Heart right ventricle (tissue), 16 donors: ENCODE measurements at regions of chr12 and their contacts with region 1.

Region 1: GRCh38 chr12:118436002-118436730 is 59.8 kb downstream of the SUDS3 start:
- DNase-seq: peak in 1 of 2 donors; percentile 10
- ATAC-seq: peak in 5 of 8 donors; percentile 59 to 75 (median 64)
- H3K4me3 ChIP-seq: no peak overlapping the region
- H3K27ac ChIP-seq: no peak overlapping the region
- H3K4me1 ChIP-seq: peaks cover 0 to 6% (median 0%) of the 10 kb centered on the region in 9 donors
- H3K27me3 ChIP-seq: peaks cover 0 to 6% (median 0%) of the 10 kb centered on the region in 7 donors
- CTCF ChIP-seq: peak in 8 of 9 donors; percentile 22 to 54 (median 38)

Region 2: DNA sequence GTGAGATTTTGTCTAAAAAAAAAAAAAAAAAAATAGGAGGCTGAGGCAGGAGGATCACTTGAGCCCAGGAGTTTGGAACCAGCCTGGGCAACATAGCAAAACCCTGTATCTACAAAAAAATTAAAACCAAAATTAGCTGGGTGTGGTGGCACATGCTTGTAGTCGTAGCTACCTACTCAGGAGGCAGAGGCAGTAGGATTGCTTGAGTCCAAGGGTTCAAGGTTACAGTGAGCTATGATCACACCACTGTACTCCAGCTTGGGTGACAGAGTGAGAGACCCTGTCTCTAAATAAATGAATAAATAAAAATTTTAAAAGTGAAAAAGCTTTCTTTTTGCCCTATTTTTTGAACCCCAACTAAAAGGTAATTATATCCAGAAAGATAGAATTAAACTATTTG is 186.6 kb before region 1 on chr12:
- intact Hi-C with region 1: no loop called
- DNase-seq: no peak
- ATAC-seq: no peak
- H3K4me3 ChIP-seq: no peak overlapping the region
- H3K27ac ChIP-seq: no peak overlapping the region
- H3K4me1 ChIP-seq: no peaks in the 10 kb centered on the region
- H3K27me3 ChIP-seq: no peaks in the 10 kb centered on the region
- CTCF ChIP-seq: no peak

Region 3: DNA sequence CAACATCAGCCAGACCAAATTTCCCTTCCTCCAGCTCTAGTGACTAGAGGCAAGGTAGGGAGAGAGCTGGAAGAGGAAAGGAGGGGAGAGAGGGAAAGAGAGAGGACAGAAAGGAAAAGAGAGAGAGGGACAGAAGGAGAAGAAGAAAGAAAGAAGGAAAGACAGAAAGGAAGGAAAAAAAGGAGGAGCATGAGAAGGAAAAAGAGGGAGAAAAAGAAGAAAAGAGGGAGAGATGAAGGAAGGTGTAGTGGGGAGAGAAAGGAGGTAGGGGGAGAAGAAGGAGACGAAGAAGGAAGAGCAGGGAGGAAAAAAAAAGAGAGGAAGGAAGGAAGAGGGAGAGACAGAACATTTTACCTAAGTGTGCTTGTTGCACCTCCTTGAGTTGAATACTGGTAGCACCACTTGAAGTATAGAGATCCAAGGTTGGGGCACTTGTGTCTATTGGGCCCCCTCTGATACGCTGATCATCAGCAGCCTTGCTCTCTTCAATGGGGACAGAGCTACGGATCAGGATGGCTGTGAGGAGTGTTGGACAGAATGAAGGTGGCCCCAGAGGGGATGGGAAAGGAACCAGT is 172.7 kb after region 1 on chr12:
- intact Hi-C with region 1: loop called in 2 of 10 experiments (anchors 10 kb)
- DNase-seq: no peak
- ATAC-seq: no peak
- H3K4me3 ChIP-seq: no peak overlapping the region
- H3K27ac ChIP-seq: no peak overlapping the region
- H3K4me1 ChIP-seq: no peaks in the 10 kb centered on the region
- H3K27me3 ChIP-seq: peaks cover 0 to 9% (median 0%) of the 10 kb centered on the region in 7 donors
- CTCF ChIP-seq: peak in 5 of 9 donors; percentile 14 to 34 (median 22)

Region 4: GRCh38 chr12:118625050-118625675 is 189.0 kb after region 1 on chr12:
- intact Hi-C with region 1: loop called in 5 of 10 experiments (anchors 5 to 10 kb)
- DNase-seq: peak in 1 of 2 donors; percentile 57
- ATAC-seq: peak; percentile 59 to 94 (median 88)
- H3K4me3 ChIP-seq: no peak overlapping the region
- H3K27ac ChIP-seq: peak overlapping the region in 1 of 10 donors; percentile 15
- H3K4me1 ChIP-seq: no peaks in the 10 kb centered on the region
- H3K27me3 ChIP-seq: no peaks in the 10 kb centered on the region
- CTCF ChIP-seq: no peak

Region 5: GRCh38 chr12:119036878-119037825 is 601.0 kb after region 1 on chr12:
- intact Hi-C with region 1: loop called in 1 of 10 experiments (anchors 10 kb)
- DNase-seq: peak in 1 of 2 donors; percentile 6
- ATAC-seq: no peak
- H3K4me3 ChIP-seq: no peak overlapping the region
- H3K27ac ChIP-seq: no peak overlapping the region
- H3K4me1 ChIP-seq: no peaks in the 10 kb centered on the region
- H3K27me3 ChIP-seq: peaks cover 0 to 29% (median 6%) of the 10 kb centered on the region in 7 donors
- CTCF ChIP-seq: peak in 8 of 9 donors; percentile 13 to 58 (median 52)